ENCODE measurements at regions of chr4 and their contacts with region 1.

Region 1: DNA sequence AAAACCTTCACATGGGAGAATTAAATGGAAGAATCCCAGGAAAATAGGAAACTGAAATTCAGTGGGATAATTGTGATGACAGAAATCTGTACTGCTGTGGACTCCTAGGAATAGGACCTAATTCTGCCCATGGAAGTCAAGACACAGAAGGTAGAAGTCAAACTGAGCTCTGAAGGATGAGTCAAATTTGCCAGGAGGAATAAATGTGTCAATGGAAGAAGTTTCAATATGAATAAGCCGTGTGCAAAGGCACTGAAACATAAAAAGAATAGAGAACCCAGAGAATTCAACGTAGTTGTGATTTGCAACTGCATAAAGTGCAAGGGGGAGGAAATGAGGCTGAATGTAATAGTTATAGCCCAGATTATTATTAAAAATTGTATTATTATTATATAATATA is 11.6 kb downstream of the ENAM start:
- DNase-seq: no peak
- ATAC-seq: no peak
- H3K4me3 ChIP-seq: no peak overlapping the region
- H3K27ac ChIP-seq: no peak overlapping the region
- H3K4me1 ChIP-seq: peaks cover 5% of the 10 kb centered on the region; the same call in 2 of the 3 replicates
- CTCF ChIP-seq: no peak
- EP300 ChIP-seq: no peak
- POLR2A ChIP-seq: no peak
- RAD21 ChIP-seq: no peak

Region 2: DNA sequence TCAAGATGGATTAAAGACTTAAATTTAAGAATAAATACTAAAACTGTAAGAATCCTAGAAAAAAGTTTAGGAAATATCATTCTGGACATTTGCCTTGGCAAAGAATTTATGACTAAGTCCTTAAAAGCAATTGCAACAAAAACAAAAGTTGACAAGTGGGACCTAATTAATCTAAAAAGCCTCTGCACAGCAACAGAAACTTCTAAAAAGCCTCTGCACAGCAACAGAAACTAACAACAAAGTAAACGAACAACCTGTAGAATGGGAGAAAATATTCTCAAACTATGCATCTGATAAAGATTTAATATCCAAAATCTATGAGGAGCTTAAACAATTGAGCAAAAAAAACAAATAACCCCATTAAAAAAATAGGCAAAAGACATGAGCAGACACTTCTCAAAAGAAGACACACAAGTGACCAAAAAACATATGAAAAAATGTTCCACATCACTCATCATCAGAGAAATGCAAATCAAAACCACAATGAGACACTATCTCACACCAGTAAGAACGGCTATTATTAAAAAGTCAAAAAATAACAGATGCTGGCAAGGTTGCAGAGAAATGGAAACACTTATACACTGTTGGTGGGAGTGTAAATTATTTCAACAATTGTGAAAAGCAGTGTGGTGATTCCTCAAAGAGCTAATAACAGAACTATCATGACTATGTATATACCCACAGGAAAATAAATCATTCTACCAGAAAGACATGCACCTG is 248.0 kb before region 1 on chr4:
- CTCF ChIA-PET with region 1: no interaction called
- POLR2A ChIA-PET with region 1: no interaction called
- DNase-seq: no peak
- ATAC-seq: no peak
- H3K4me3 ChIP-seq: no peak overlapping the region
- H3K27ac ChIP-seq: no peak overlapping the region
- H3K4me1 ChIP-seq: no peaks in the 10 kb centered on the region
- CTCF ChIP-seq: no peak
- EP300 ChIP-seq: no peak
- POLR2A ChIP-seq: no peak
- RAD21 ChIP-seq: no peak

Region 3: DNA sequence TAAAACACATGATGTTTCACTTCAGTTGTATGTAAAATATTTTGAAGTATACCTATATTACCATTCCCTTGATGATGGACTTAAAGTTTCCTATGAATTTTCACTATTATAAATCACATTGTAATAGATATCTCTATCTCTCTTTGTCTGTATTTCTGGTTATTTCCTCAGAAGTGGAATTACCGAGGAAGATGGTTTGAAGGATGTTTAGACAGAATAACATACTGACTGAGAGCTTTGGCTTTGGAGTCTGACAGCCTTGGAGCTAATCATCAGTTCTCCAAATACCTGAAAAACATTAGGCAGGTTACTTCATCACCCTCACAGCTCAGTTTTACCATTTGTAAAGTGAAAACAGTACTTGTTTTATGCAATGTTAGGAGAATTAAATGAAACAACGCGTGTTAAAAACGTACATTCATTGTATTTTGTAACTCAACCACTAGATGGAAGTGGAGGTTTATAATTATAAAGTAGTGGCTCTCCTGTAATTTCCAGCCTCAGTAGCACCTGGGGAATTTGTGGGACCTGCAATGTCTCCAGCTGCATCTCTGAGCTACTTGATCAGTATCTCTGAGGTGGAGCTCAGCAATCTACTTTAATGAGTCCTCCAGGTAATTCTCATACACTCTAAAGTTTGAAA is 11.8 kb after region 1 on chr4:
- CTCF ChIA-PET with region 1: interaction called, 10 read pairs
- POLR2A ChIA-PET with region 1: no interaction called
- DNase-seq: peak; percentile 15 to 22
- ATAC-seq: peak; percentile 66 to 81; a peak in 3 of 6 replicates
- H3K4me3 ChIP-seq: no peak overlapping the region
- H3K27ac ChIP-seq: peak overlapping the region in 1 of 2 experiments; percentile 15; a peak in 1 of 6 replicates
- H3K4me1 ChIP-seq: peaks cover 12% of the 10 kb centered on the region; the same call in 2 of the 3 replicates
- CTCF ChIP-seq: peak; percentile 64
- EP300 ChIP-seq: no peak
- POLR2A ChIP-seq: no peak
- RAD21 ChIP-seq: peak; percentile 65 to 76